Posterior cingulate gyrus (tissue), 11 donors: ENCODE measurements at regions of chr6 and their contacts with region 1.

Region 1: GRCh38 chr6:46704562-46704961 is 16.9 kb downstream of the TDRD6 start:
- DNase-seq: peak in 1 of 10 donors; percentile 10

Region 2: GRCh38 chr6:46626228-46626909 is 78.2 kb before region 1 on chr6:
- intact Hi-C with region 1: no loop called
- DNase-seq: no peak

Region 3: DNA sequence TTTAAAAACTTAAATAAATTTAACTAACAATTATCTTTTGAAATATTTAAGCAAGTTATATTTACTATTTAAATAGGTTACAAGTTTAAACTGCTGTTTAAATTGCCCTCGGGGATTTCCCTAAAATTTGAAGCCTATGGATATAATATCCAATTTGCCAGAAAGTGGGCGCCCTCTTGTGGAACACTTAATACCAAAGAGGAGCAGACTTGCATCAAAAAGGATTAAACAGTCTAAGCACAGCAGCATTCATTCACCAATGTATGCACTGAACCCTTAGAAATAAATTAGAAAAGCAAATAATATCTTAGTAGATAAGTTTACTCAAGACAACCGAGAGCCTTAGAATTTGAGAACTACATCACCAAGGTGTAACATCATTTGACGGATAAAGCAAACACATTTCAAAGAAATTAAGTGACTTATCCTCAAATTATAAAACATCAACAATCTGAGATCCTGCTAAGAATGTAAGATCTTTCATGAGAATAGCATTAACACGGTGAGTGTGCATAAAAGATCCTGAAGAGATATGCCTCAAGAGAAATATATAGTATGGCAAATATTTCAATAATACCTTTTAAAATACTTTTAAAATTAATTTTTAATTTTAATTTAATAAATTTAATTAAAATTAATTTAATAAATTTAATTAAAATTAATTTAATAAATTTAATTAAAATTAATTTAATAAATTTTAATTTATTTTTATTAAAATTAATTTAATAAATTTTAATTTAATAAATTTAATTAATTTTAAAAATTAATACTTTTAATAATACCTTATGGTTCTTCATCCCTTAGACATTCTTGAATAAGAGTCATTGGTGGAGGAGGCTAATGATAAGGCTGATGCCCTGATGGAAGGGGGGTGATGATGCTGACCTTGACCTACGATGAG is 77.2 kb after region 1 on chr6:
- intact Hi-C with region 1: loop called (anchors 10 kb)
- DNase-seq: peak in 4 of 10 donors; percentile 35 to 59 (median 54)

Region 4: GRCh38 chr6:47440719-47441118 is 736.2 kb after region 1 on chr6:
- intact Hi-C with region 1: no loop called
- DNase-seq: no peak